ENCODE measurements at regions of chr9 and their contacts with region 1.

Region 1: GRCh38 chr9:111301195-111301594 is 28.8 kb downstream of the OR2K2 start:
- DNase-seq: no peak
- H3K4me3 ChIP-seq: no peak overlapping the region
- H3K27ac ChIP-seq: peak overlapping the region in 2 of 4 donors; percentile 17 to 58
- H3K4me1 ChIP-seq: peaks cover 0 to 9% (median 0%) of the 10 kb centered on the region in 3 donors
- H3K27me3 ChIP-seq: peaks cover 0 to 15% (median 0%) of the 10 kb centered on the region in 4 donors
- CTCF ChIP-seq: no peak
- POLR2A ChIP-seq: no peak

Region 2: DNA sequence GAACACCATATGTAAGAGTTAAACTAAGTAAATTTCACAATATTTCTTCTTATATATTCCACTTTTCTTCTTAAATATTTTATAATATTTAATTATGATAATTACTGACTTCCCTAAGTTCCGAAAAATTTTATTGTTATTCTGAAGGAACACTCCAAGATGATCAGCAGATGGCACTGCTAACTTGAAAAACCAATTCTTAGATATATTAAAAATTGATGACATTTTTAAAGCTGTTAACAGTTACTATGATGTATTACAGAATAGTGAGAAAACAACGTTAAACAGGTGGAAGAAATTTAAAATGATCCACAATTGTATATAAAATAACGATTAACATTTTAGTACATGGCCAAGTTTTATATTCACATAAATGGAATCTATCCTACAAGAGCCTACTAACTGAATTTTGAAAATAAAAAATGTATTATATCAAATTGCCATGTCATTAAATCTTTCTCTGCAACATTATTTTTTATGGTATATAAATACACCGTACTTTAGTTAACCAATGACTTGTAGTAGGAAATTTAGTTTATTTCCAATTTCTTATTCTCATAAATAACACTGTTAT is 662.7 kb before region 1 on chr9:
- intact Hi-C with region 1: loop called (anchors 5 kb)
- DNase-seq: no peak
- H3K4me3 ChIP-seq: no peak overlapping the region
- H3K27ac ChIP-seq: no peak overlapping the region
- H3K4me1 ChIP-seq: no peaks in the 10 kb centered on the region
- H3K27me3 ChIP-seq: no peaks in the 10 kb centered on the region
- CTCF ChIP-seq: peak in 4 of 6 experiments; percentile 33 to 55 (median 40)
- POLR2A ChIP-seq: no peak

Region 3: GRCh38 chr9:110986529-110986928 is 314.7 kb before region 1 on chr9:
- intact Hi-C with region 1: no loop called
- DNase-seq: no peak
- H3K4me3 ChIP-seq: no peak overlapping the region
- H3K27ac ChIP-seq: no peak overlapping the region
- H3K4me1 ChIP-seq: no peaks in the 10 kb centered on the region
- H3K27me3 ChIP-seq: no peaks in the 10 kb centered on the region
- CTCF ChIP-seq: no peak
- POLR2A ChIP-seq: no peak

Measured in esophagus squamous epithelium (tissue), 5 donors.